ENCODE measurements at regions of chrX and their contacts with region 1.

Region 1: GRCh38 chrX:1481636-1482529 is 29.2 kb upstream of the ASMTL start:
- DNase-seq: peak; percentile 94
- H3K4me3 Mint-ChIP-seq: peak overlapping the region; percentile 94
- H3K27ac Mint-ChIP-seq: peak overlapping the region; percentile 99
- H3K4me1 Mint-ChIP-seq: peaks cover 63% of the 10 kb centered on the region
- H3K27me3 Mint-ChIP-seq: no peaks in the 10 kb centered on the region

Region 2: DNA sequence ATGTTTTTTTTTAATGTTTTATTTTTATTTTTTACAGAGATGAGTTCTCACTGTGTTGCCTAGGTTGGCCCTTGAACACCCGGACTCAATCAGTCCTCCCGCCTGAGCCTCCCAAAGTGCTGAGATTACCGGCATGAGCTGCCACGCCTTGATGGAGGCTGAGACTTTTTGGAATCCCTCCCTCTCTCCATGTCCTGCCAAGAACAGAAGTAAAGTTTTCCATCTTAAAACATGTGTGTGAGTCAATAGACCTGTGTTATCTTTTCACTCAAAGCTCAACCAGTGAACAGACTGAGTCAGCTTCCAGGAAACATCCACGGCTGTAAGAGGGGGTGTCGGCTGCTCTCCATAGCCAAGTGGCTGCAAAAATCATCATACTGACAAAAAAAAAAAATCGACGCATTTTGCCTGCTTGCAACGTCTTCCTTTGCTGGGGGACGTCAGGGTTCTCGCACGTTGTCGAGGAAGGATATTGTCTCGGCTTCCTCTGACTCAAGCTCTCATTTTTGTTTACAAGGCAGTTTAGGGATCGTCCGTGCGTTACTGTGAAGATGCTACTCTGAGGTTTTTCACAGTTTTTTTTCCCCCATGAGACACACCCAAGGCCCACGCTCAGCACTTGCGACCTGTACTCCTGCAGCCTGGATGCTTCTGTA is 19.2 kb before region 1 on chrX:
- intact Hi-C with region 1: loop called (anchors 1 kb)
- DNase-seq: peak; percentile 93
- H3K4me3 Mint-ChIP-seq: peak overlapping the region; percentile 83
- H3K27ac Mint-ChIP-seq: peak overlapping the region; percentile 87
- H3K4me1 Mint-ChIP-seq: peaks cover 47% of the 10 kb centered on the region
- H3K27me3 Mint-ChIP-seq: no peaks in the 10 kb centered on the region

Region 3: DNA sequence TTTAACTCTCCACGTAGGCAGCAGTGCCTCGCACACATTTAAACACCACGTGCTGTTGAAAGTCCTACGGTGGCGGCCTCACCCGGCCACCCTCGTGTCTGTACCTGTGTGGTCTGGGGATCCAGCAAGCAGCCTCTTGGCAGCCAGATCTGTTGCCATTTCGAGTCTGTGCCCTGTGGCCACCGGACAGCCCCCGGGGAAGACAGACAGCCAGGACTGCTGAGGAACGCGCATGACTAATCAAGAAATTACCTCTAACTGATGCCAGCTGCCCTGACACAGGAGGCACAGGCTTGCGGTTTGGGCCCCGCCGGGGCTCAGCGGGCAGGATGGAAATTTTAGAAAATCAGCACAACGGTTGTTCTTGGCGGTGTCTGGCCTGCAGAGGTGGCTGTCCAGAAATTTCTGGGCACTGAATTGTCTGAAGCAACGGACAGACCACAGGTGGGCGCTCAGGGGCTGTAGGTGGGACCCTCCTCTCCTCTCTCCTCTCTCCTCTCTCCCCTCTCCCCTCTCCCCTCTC is 13.6 kb before region 1 on chrX:
- intact Hi-C with region 1: loop called (anchors 1 kb)
- DNase-seq: peak; percentile 90
- H3K4me3 Mint-ChIP-seq: peak overlapping the region; percentile 83
- H3K27ac Mint-ChIP-seq: peak overlapping the region; percentile 92
- H3K4me1 Mint-ChIP-seq: peaks cover 70% of the 10 kb centered on the region
- H3K27me3 Mint-ChIP-seq: no peaks in the 10 kb centered on the region

Region 4: GRCh38 chrX:1491851-1492349 is 10.0 kb after region 1 on chrX:
- intact Hi-C with region 1: loop called (anchors 1 kb)
- DNase-seq: peak; percentile 89
- H3K4me3 Mint-ChIP-seq: no peak overlapping the region
- H3K27ac Mint-ChIP-seq: peak overlapping the region; percentile 63
- H3K4me1 Mint-ChIP-seq: peaks cover 35% of the 10 kb centered on the region
- H3K27me3 Mint-ChIP-seq: no peaks in the 10 kb centered on the region

Region 5: DNA sequence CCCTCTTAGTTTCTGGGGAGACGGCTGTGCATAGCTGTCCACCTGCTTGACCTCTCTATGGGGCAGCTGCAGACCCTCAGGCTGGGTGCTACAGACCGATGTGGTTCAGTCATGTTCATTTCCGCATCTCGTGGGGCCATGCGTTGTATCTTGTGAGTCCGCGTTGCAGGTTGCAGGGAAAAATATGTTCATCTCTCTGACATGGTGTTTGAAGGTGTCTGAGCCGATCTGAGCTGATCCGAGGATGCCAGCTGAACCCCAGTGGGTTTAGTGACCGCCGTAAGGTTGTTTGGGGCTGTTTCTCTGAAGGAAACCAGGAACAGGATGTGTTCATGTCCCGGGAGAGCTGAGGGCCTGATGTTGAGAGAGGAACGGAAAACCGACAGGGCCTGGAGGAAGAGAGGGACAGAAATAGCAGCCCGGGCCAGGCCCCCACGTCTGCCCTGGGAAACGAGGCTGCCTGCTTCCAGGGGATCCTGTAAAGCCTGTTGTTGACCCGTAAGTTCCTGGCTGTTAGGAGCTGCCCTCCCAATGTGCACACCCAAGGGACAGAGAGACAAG is 64.9 kb after region 1 on chrX:
- intact Hi-C with region 1: no loop called
- DNase-seq: peak; percentile 53
- H3K4me3 Mint-ChIP-seq: no peak overlapping the region
- H3K27ac Mint-ChIP-seq: no peak overlapping the region
- H3K4me1 Mint-ChIP-seq: peaks cover 8% of the 10 kb centered on the region
- H3K27me3 Mint-ChIP-seq: no peaks in the 10 kb centered on the region